Head of caudate nucleus (tissue), 42 donors: ENCODE measurements at regions of chr5 and their contacts with region 1.

Region 1: GRCh38 chr5:57779383-57780223 is 297.0 kb upstream of the ACTBL2 start:
- DNase-seq: peak in 35 of 42 donors; percentile 9 to 81 (median 57)

Region 2: DNA sequence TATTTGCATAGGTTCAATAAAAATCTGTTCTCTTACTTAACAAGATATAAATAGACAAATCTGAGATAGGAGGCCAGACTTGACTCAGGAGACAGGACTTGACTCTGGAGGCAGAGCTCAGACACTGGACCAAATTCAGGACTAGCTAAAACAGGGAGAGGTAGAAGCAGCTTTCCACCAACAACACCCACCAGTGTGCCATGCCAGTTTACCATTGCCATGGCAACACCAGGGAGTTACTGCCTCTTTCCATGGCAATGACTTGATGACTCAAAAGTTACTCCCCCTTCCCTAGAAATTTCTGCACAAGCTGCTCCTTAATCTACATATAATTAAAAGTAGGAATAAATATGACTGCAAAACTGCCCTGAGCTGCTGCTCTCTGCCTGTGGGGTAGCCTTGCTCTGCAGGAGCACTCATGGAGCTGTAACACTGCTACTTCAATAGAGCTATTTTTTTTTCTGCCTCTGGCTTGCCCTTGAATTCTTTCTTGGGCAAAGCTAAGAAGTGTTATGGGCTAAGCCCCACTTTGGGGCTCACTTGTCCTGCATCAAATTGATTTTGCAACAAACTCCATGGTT is 207.2 kb after region 1 on chr5:
- intact Hi-C with region 1: loop called (anchors 10 kb)
- DNase-seq: peak; percentile 26 to 91 (median 66)